ENCODE measurements at regions of chr9 and their contacts with region 1.

Region 1: DNA sequence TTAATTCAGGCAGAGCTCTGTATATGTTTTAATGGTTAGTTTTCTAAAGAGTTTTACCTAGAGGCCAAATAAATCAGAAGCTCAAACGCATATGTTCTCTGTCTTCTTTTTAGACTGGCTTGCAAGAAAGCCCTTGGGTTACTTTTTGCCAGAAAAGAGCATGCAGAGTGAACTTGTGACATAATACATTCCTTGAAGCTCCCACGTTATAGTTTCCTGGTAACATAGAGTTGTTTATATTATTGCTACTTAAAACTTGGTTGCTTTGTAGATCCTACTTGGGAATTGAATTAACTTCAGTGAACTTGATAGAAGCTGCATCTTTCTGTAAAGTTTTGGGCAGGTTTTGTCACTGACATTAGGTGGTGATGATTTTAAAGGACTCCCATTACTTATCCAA is 102.9 kb downstream of the C9orf152 start:
- DNase-seq: no peak
- ATAC-seq: no peak
- H3K4me3 ChIP-seq: no peak overlapping the region
- H3K27ac ChIP-seq: no peak overlapping the region
- H3K4me1 ChIP-seq: peaks cover 58% of the 10 kb centered on the region
- H3K27me3 ChIP-seq: no peaks in the 10 kb centered on the region
- CTCF ChIP-seq: no peak
- EP300 ChIP-seq: no peak
- POLR2A ChIP-seq: no peak
- RAD21 ChIP-seq: no peak

Region 2: DNA sequence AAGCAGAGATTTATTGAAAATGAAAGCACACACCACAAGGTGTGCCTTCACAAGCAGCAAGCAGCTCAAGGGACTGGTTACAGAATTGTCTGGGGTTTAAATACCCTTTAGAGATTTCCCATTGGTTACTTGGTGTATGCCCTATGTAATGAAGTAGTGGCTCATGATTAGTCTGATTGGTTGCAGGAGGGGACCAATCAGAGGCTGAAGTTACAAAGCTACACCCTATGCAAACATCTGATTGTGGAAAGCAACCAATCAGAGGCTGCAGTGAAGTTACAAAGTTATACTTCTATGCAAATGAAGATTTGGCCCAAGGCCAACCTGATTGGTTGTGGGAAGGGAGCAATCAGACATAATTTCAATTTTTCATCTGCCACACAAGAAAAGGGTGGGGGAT is 17.0 kb before region 1 on chr9:
- CTCF ChIA-PET with region 1: interaction called, 14 read pairs
- POLR2A ChIA-PET with region 1: interaction called, 6 read pairs
- RAD21 ChIA-PET with region 1: interaction called, 10 read pairs
- SMC1A ChIA-PET with region 1: interaction called, 14 read pairs
- in situ Hi-C with region 1: no loop called
- intact Hi-C with region 1: no loop called
- DNase-seq: no peak
- ATAC-seq: peak; percentile 84
- H3K4me3 ChIP-seq: no peak overlapping the region
- H3K27ac ChIP-seq: no peak overlapping the region
- H3K4me1 ChIP-seq: peaks cover 6% of the 10 kb centered on the region
- H3K27me3 ChIP-seq: no peaks in the 10 kb centered on the region
- CTCF ChIP-seq: no peak
- EP300 ChIP-seq: no peak
- POLR2A ChIP-seq: no peak
- RAD21 ChIP-seq: no peak

Region 3: GRCh38 chr9:110116543-110116885 is 11.4 kb after region 1 on chr9:
- CTCF ChIA-PET with region 1: interaction called, 10 read pairs
- POLR2A ChIA-PET with region 1: interaction called, 9 read pairs
- RAD21 ChIA-PET with region 1: interaction called, 340 read pairs
- SMC1A ChIA-PET with region 1: interaction called, 63 read pairs
- in situ Hi-C with region 1: no loop called
- intact Hi-C with region 1: no loop called
- DNase-seq: no peak
- ATAC-seq: peak; percentile 18; the same call in 1 of the 3 replicates
- H3K4me3 ChIP-seq: no peak overlapping the region
- H3K27ac ChIP-seq: no peak overlapping the region
- H3K4me1 ChIP-seq: peaks cover 6% of the 10 kb centered on the region
- H3K27me3 ChIP-seq: no peaks in the 10 kb centered on the region
- CTCF ChIP-seq: no peak
- EP300 ChIP-seq: no peak
- POLR2A ChIP-seq: no peak
- RAD21 ChIP-seq: no peak